HCT116 (cell line): ENCODE measurements at regions of chr2 and their contacts with region 1.

Region 1: DNA sequence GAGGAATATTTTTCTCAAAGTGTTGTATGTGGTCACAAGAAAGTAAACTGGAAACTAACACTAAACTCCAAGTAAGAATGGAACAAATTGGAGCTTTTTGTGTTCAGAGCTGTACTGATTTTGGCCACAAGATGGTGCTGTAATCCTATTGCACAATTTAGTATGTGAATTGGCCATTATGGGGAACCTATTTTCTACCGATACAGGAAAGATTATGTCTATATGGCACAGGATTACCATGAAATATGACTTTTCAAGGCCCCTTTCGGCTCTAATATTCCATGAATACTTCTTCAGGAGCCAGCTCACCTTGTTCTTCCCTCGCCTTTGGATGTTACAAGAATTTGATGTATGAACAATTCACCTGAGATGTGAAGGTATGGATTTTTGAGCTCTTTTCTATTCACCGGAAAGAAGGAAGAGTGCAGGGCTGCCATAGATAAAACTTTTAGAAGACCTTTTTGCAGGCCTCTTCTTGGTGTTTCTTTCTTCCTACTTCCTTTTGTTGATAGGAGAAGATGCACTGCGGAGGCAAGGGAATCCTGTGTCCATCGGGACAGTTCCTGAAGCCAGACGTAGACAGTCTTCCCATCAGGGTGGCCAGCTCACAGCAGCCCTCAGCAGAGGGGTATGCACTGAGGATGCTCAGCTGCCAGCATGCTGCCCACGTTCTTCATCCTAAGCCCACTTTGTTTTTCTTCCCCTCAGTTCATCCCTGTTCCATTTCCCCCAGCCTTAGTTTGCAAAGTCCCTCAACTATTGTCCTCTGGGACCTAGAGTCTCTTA is 13.3 kb downstream of the MRPL44 start:
- DNase-seq: peak; percentile 49
- ATAC-seq: peak; percentile 77
- H3K4me3 ChIP-seq: no peak overlapping the region
- H3K27ac ChIP-seq: no peak overlapping the region
- H3K4me1 ChIP-seq: no peaks in the 10 kb centered on the region
- H3K27me3 ChIP-seq: no peaks in the 10 kb centered on the region
- CTCF ChIP-seq: peak; percentile 84 to 96 (median 93)
- POLR2A ChIP-seq: no peak
- RAD21 ChIP-seq: peak; percentile 95

Region 2: DNA sequence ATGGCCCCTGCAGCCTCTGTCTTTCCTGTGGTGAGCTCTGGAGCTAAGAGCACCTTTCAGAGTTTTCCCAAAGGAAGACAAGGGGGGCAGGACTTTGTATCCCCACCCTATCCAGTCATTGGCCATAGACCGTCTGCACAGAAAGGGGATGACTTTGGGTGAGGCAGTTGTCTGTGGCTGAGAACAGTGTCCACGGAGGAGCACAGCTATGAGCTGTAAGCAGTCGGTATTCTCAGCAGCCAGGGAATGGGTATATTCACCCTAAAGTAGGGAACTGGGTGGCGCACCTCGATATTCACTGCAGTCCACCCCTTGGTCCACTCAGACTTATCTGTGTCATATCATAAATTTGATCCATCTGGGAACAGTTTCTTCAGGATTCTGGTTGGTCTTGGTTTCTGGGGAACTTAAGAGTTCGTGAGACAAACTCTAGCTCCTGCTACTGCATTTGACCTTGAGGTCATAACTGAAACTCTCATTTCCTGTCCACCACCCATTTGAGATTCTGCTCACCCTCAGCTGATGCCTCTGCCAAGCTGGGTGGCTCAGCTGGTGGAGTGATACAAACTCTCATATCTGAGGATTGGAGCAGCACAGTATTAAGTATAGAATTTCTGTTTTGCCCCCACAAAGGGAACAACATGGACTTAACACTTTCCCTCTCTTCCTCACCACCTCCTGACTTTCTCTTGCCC is 323.1 kb before region 1 on chr2:
- CTCF ChIA-PET with region 1: no interaction called
- POLR2A ChIA-PET with region 1: no interaction called
- RAD21 ChIA-PET with region 1: no interaction called
- intact Hi-C with region 1: no loop called
- DNase-seq: no peak
- ATAC-seq: no peak
- H3K4me3 ChIP-seq: no peak overlapping the region
- H3K27ac ChIP-seq: no peak overlapping the region
- H3K4me1 ChIP-seq: peaks cover 3 to 17% of the 10 kb centered on the region in 2 experiments; a peak in 2 of 4 replicates
- H3K27me3 ChIP-seq: no peaks in the 10 kb centered on the region
- CTCF ChIP-seq: no peak
- POLR2A ChIP-seq: no peak
- RAD21 ChIP-seq: no peak

Region 3: DNA sequence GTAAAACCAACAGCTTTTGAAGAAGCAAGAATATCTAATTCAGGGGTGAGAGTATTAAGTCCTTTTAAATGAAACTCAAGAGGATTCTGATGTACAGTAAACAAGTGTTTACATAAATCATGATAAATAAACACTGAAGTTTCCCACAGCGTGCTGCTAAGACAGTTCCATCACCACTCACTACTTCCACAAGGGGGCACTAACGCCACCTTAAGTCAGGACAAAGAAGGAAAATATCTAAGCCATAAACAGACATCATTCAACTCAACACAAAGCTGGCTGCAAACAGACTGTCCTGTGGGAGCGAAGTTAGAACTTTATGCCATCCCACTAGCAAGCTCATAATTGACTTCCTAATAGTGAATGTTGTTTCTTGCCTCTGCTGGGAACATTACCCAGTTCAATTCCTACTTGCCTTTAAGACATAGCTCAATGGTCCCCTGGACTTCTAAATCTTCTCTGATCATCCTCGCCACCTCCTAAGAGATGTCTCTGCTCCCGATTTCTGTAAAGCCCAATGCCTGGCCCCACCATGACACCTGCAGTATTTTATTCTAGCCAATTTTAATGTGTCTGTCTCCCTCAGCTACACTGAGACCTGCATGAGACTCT is 23.2 kb after region 1 on chr2:
- CTCF ChIA-PET with region 1: interaction called, 28 read pairs
- POLR2A ChIA-PET with region 1: interaction called, 3 read pairs
- RAD21 ChIA-PET with region 1: interaction called in 1 of 2 experiments, 5 read pairs
- intact Hi-C with region 1: no loop called
- DNase-seq: peak; percentile 78
- ATAC-seq: peak; percentile 85
- H3K4me3 ChIP-seq: no peak overlapping the region
- H3K27ac ChIP-seq: no peak overlapping the region
- H3K4me1 ChIP-seq: peaks cover 0 to 9% of the 10 kb centered on the region in 2 experiments; a peak in 2 of 4 replicates
- H3K27me3 ChIP-seq: no peaks in the 10 kb centered on the region
- CTCF ChIP-seq: peak; percentile 76 to 89 (median 87)
- POLR2A ChIP-seq: no peak
- RAD21 ChIP-seq: peak; percentile 92

Region 4: DNA sequence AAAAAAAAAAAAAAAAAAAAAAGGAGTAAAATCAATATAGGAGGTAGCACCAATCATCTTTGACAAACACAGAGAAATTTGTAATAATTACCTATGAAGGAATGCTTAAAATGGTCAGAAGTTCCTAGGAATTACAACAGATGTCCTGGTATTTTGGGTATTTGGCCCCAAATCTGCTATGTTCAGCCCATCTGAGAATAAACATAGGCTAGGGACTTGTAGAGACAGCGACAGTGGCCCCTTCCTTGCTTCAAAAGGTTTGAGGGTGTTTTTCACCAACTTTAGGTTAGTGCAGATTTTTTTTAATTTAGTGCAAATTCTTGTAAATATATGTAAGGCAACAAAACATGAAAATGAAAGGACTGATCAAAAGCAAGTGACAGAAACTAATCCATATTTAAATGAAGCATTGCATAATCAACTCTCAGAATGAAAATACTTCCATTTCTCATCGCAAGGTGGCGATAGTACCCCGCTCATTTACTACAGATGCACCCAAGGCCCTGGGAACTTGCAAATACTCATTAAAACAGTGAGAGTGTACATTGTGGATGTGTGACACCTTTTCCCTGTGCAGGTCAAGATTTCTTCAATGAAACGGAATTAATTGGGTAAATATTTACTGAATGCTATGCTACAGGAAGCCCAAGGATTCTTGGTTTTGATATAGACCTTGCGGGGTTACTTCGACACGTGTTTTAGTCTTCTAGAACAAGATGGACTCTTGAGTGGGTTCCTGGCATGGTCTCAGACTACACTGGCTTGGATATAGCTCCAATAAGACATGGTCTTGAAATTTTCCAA is 386.8 kb after region 1 on chr2:
- CTCF ChIA-PET with region 1: interaction called, 34 read pairs
- POLR2A ChIA-PET with region 1: interaction called, 5 read pairs
- RAD21 ChIA-PET with region 1: interaction called in 1 of 2 experiments, 6 read pairs
- intact Hi-C with region 1: loop called (anchors 2 kb)
- DNase-seq: peak; percentile 44
- ATAC-seq: peak; percentile 83
- H3K4me3 ChIP-seq: no peak overlapping the region
- H3K27ac ChIP-seq: no peak overlapping the region
- H3K4me1 ChIP-seq: 0 out of 4 replicates have a peak, but pooled peaks cover 0 to 4% of the 10 kb centered on the region in 2 experiments
- H3K27me3 ChIP-seq: no peaks in the 10 kb centered on the region
- CTCF ChIP-seq: peak; percentile 62 to 91 (median 85); a peak in 5 of 6 replicates
- POLR2A ChIP-seq: no peak
- RAD21 ChIP-seq: peak; percentile 92

Region 5: GRCh38 chr2:224650815-224651439 is 680.4 kb after region 1 on chr2:
- CTCF ChIA-PET with region 1: interaction called, 5 read pairs
- POLR2A ChIA-PET with region 1: no interaction called
- RAD21 ChIA-PET with region 1: no interaction called
- intact Hi-C with region 1: loop called (anchors 5 kb)
- DNase-seq: peak; percentile 53
- ATAC-seq: peak; percentile 87
- H3K4me3 ChIP-seq: no peak overlapping the region
- H3K27ac ChIP-seq: no peak overlapping the region
- H3K4me1 ChIP-seq: peaks cover 0 to 2% of the 10 kb centered on the region in 2 experiments; a peak in 1 of 4 replicates
- H3K27me3 ChIP-seq: no peaks in the 10 kb centered on the region
- CTCF ChIP-seq: peak; percentile 72 to 90 (median 77); a peak in 5 of 6 replicates
- POLR2A ChIP-seq: no peak
- RAD21 ChIP-seq: peak; percentile 88

Region 6: GRCh38 chr2:225002039-225002655 is 1031.6 kb after region 1 on chr2:
- CTCF ChIA-PET with region 1: no interaction called
- POLR2A ChIA-PET with region 1: no interaction called
- RAD21 ChIA-PET with region 1: no interaction called
- intact Hi-C with region 1: loop called (anchors 10 kb)
- DNase-seq: peak; percentile 43
- ATAC-seq: peak; percentile 86
- H3K4me3 ChIP-seq: no peak overlapping the region
- H3K27ac ChIP-seq: no peak overlapping the region
- H3K4me1 ChIP-seq: no peaks in the 10 kb centered on the region
- H3K27me3 ChIP-seq: no peaks in the 10 kb centered on the region
- CTCF ChIP-seq: peak; percentile 74 to 79 (median 76)
- POLR2A ChIP-seq: no peak
- RAD21 ChIP-seq: peak; percentile 87